Psoas muscle (tissue), 8 donors: ENCODE measurements at regions of chr20 and their contacts with region 1.

Region 1: GRCh38 chr20:47317127-47317895 is 39.2 kb downstream of the ZMYND8 start:
- DNase-seq: peak; percentile 90 to 94
- ATAC-seq: peak; percentile 77 to 85 (median 83)
- H3K4me3 ChIP-seq: peak overlapping the region; percentile 58
- H3K27ac ChIP-seq: peak overlapping the region; percentile 96
- H3K4me1 ChIP-seq: peaks cover 64% of the 10 kb centered on the region
- H3K27me3 ChIP-seq: no peaks in the 10 kb centered on the region
- CTCF ChIP-seq: no peak

Region 2: GRCh38 chr20:45934586-45935415 is 1382.5 kb before region 1 on chr20 and contains the start of gene PCIF1:
- intact Hi-C with region 1: loop called in 1 of 2 experiments (anchors 10 kb)
- DNase-seq: peak; percentile 98 to 99
- ATAC-seq: peak; percentile 86 to 92 (median 88)
- H3K4me3 ChIP-seq: peak within 1 kb of the TSS; percentile 97
- H3K27ac ChIP-seq: peak within 1 kb of the TSS; percentile 100
- H3K4me1 ChIP-seq: peaks cover 18% of the 10 kb centered on the region
- H3K27me3 ChIP-seq: no peaks in the 10 kb centered on the region
- CTCF ChIP-seq: no peak
- total RNA-seq, gene PCIF1: 24.7 to 46.7 (median 32.0) TPM

Region 3: DNA sequence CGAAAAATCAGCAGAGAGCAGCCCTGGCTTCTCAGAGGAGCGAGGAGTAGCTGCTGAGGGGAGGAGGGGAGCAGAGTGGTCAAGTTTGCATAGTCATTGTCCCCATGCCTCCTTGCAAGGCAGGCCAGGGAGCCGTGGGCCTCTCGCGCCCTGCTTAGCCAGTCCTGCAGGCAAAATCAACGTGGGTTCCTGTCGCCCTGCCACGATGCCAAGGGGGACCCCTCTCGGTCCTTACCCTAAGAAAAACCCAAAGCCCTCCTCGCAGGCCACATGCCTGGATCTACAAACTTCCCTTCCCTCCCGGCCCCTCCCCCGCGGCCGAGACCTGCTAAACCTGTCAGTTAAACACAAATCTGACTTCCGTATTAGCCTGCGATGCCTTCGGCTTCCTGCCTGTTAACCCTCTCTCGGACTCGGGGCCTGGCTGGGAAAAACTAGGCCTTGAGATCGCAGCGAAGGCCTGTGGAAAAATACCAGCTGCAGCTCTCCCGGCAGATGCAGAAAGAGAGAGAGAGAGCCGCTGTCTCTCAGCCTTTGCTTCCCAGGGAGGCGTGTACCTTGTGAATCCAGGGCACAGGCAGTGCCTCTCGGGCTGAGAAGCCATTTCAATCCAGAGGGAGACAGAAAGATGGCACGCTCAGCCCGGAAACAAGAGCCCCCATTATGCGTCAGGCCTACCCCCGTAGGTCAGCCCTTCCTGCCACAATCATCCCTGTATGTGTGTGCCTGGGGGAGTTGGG is 40.2 kb after region 1 on chr20:
- intact Hi-C with region 1: loop called (anchors 1 to 2 kb)
- DNase-seq: peak; percentile 81 to 88
- ATAC-seq: peak; percentile 35 to 58 (median 40)
- H3K4me3 ChIP-seq: peak overlapping the region; percentile 61
- H3K27ac ChIP-seq: peak overlapping the region; percentile 97
- H3K4me1 ChIP-seq: peaks cover 89% of the 10 kb centered on the region
- H3K27me3 ChIP-seq: no peaks in the 10 kb centered on the region
- CTCF ChIP-seq: no peak